Activated T-helper 1 cell treated with anti-CD3 and anti-CD28 coated beads, Interleukin-12 subunit alpha, Interleukin-12 subunit beta, Interleukin-2, Interleukin-4 antibody, amounts not matched to agents 30 ng/mL and 10 ng/mL and 1 ng/mL, durations not matched to agents 14 hours and 24 hours and 36 hours (primary cell): ENCODE measurements at regions of chr2 and their contacts with region 1.

Region 1: GRCh38 chr2:169562519-169562918 is 11.1 kb downstream of the FASTKD1 start:
- DNase-seq: no peak
- H3K4me3 Mint-ChIP-seq: no peak overlapping the region
- H3K27ac Mint-ChIP-seq: no peak overlapping the region
- H3K4me1 Mint-ChIP-seq: no peaks in the 10 kb centered on the region
- H3K27me3 Mint-ChIP-seq: no peaks in the 10 kb centered on the region

Region 2: DNA sequence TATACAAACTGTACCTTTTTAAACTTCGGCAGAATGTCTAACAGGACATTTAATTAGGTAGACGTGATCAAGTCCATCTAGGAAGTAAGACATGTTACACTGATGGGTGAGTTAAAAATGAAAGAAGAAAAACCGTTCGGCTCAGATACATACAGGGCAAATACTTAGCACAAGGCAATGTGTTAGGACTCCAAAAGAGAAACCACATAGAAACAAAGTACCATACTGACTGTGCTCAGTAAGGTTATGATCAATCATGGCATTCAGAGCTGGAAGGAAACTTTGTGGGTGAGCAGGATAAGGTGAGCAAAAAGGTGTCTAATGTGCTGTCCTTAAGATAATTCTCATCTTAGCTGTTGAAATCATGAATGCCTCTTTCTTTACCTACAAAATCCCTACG is 1527.1 kb before region 1 on chr2:
- intact Hi-C with region 1: no loop called
- DNase-seq: no peak
- H3K4me3 Mint-ChIP-seq: no peak overlapping the region
- H3K27ac Mint-ChIP-seq: no peak overlapping the region
- H3K4me1 Mint-ChIP-seq: peaks cover 9% of the 10 kb centered on the region
- H3K27me3 Mint-ChIP-seq: no peaks in the 10 kb centered on the region

Region 3: DNA sequence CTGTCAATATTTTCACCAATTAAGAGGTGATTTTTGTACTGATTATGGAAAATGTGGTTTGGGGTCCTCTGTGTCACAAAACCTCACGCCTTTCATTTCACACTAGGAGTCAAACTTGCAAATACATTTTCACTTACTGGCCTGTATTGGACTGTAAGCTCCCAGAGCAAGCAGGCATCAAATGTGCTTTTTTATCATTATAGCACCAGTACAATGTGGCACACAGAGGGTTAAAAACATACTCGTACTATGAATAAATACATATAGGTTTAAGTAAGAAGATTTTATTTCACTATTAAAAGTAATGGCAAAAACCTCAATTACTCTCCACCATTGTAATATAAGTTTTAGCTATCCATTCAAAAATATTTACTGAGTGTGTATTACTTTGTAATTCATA is 588.1 kb before region 1 on chr2:
- intact Hi-C with region 1: loop called (anchors 2 kb)
- DNase-seq: no peak
- H3K4me3 Mint-ChIP-seq: no peak overlapping the region
- H3K27ac Mint-ChIP-seq: no peak overlapping the region
- H3K4me1 Mint-ChIP-seq: peaks cover 4% of the 10 kb centered on the region
- H3K27me3 Mint-ChIP-seq: peaks cover 3% of the 10 kb centered on the region

Region 4: GRCh38 chr2:169438460-169439072 is 124.0 kb before region 1 on chr2:
- intact Hi-C with region 1: no loop called
- DNase-seq: no peak
- H3K4me3 Mint-ChIP-seq: no peak overlapping the region
- H3K27ac Mint-ChIP-seq: no peak overlapping the region
- H3K4me1 Mint-ChIP-seq: no peaks in the 10 kb centered on the region
- H3K27me3 Mint-ChIP-seq: peaks cover 22% of the 10 kb centered on the region

Region 5: GRCh38 chr2:169462896-169463695 is 99.4 kb before region 1 on chr2:
- intact Hi-C with region 1: loop called (anchors 2 kb)
- DNase-seq: no peak
- H3K4me3 Mint-ChIP-seq: no peak overlapping the region
- H3K27ac Mint-ChIP-seq: no peak overlapping the region
- H3K4me1 Mint-ChIP-seq: no peaks in the 10 kb centered on the region
- H3K27me3 Mint-ChIP-seq: no peaks in the 10 kb centered on the region

Region 6: GRCh38 chr2:169798718-169799592 is 236.4 kb after region 1 on chr2 and contains the start of gene SSB:
- intact Hi-C with region 1: no loop called
- DNase-seq: peak; percentile 89
- H3K4me3 Mint-ChIP-seq: peak within 1 kb of the TSS; percentile 93
- H3K27ac Mint-ChIP-seq: peak within 1 kb of the TSS; percentile 89
- H3K4me1 Mint-ChIP-seq: peaks cover 32% of the 10 kb centered on the region
- H3K27me3 Mint-ChIP-seq: peaks cover 10% of the 10 kb centered on the region
- total RNA-seq, gene SSB: 101 and 107 TPM in 2 replicates